ENCODE measurements at regions of chr19 and their contacts with region 1.

Region 1: GRCh38 chr19:49875857-49876421 is 1.2 kb downstream of the AKT1S1 start:
- DNase-seq: no peak
- H3K4me3 ChIP-seq: peak overlapping the region; percentile 83
- H3K27me3 ChIP-seq: no peaks in the 10 kb centered on the region
- CTCF ChIP-seq: no peak

Region 2: GRCh38 chr19:49814010-49814409 is 61.9 kb before region 1 on chr19:
- CTCF ChIA-PET with region 1: no interaction called
- POLR2A ChIA-PET with region 1: interaction called, 16 read pairs
- DNase-seq: no peak
- H3K4me3 ChIP-seq: peak overlapping the region; percentile 65
- H3K27me3 ChIP-seq: no peaks in the 10 kb centered on the region
- CTCF ChIP-seq: no peak

Region 3: GRCh38 chr19:49843265-49843664 is 32.7 kb before region 1 on chr19:
- CTCF ChIA-PET with region 1: no interaction called
- POLR2A ChIA-PET with region 1: no interaction called
- DNase-seq: no peak
- H3K4me3 ChIP-seq: no peak overlapping the region
- H3K27me3 ChIP-seq: no peaks in the 10 kb centered on the region
- CTCF ChIP-seq: no peak

Region 4: DNA sequence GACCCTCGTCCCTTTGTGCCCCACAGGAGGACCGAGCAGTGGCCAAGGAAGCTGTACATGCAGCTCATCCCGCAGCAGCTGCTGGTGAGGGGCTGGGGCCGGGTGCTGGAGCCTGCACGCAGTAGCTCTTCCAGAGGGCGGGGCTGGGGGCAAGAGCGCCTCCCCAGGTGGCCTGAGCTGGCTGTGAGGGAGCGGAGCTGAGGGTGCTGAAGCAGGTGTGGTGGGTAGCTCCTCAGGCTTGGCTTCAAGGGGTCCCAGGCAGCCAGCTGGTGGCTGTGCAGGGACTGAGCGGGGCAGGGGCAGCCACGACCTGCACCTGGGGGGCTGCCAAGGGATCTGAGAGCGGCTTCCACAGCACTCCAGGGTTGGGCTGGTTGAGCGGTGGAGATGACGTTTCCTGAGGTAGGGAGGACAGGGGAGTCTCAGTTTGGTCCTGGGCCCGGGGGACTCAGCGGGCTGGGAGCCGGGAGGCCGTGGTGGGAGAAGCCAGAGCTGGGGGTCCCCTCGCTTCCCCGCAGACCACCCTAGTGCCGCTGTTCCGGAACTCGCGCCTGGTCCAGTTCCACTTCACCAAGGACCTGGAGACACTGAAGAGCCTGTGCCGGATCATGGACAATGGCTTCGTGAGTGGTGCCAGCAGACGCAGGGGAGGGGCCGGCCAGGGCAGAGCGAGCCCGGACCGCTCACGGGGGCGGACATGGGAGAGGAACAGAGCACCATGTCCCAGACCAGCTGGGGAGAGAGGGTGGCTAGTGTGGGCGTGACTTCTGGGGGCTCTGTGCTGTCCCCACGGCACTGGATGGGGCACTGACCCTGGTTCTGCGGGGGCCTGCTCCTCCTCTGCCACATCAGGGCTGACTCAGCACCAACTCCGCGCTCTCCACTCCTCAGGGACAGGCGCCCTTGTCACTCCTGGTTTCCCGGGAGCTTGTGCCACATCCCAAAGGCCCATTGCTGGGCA is 17.6 kb before region 1 on chr19:
- CTCF ChIA-PET with region 1: no interaction called
- POLR2A ChIA-PET with region 1: no interaction called
- DNase-seq: no peak
- H3K4me3 ChIP-seq: no peak overlapping the region
- H3K27me3 ChIP-seq: no peaks in the 10 kb centered on the region
- CTCF ChIP-seq: no peak

Region 5: DNA sequence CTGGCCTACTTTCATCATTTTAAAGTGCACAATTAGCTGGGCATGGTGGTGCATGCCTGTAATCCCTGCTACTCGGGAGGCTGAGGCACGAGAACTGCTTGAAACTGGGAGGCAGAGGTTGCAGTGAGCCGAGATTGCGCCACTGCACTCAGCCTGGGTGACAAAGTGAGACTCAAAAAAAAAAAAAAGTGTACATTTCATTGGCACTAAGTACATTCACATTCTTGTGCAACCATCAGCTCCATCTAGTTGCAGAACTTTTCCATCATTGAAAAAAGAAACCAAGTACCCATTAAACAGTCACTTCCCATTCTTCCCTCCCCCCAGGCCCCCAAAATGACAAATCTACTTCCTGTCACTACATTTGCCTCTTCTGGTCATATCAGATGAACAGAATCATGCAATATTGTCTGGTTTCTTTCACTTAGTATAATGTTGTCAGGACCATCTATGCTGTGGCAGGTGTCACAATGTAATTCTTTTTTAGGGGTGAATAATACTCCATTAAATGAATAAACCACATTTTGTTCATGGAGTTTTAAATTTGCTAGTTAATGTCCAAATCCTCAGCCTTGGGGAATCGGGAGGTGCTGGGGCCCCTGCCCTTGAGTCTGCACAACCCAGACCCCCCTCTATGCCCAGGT is 92.5 kb after region 1 on chr19:
- CTCF ChIA-PET with region 1: no interaction called
- POLR2A ChIA-PET with region 1: no interaction called
- DNase-seq: no peak
- H3K4me3 ChIP-seq: no peak overlapping the region
- H3K27me3 ChIP-seq: no peaks in the 10 kb centered on the region
- CTCF ChIP-seq: no peak

Measured in BJ (cell line).